Dorsolateral prefrontal cortex (tissue), 120 donors: ENCODE measurements at regions of chr1 and their contacts with region 1.

Region 1: GRCh38 chr1:231200388-231201031 is 38.7 kb downstream of the TRIM67 start:
- DNase-seq: no peak
- H3K4me3 ChIP-seq: no peak overlapping the region
- H3K27ac ChIP-seq: no peak overlapping the region
- H3K27me3 ChIP-seq: no peaks in the 10 kb centered on the region
- CTCF ChIP-seq: no peak

Region 2: DNA sequence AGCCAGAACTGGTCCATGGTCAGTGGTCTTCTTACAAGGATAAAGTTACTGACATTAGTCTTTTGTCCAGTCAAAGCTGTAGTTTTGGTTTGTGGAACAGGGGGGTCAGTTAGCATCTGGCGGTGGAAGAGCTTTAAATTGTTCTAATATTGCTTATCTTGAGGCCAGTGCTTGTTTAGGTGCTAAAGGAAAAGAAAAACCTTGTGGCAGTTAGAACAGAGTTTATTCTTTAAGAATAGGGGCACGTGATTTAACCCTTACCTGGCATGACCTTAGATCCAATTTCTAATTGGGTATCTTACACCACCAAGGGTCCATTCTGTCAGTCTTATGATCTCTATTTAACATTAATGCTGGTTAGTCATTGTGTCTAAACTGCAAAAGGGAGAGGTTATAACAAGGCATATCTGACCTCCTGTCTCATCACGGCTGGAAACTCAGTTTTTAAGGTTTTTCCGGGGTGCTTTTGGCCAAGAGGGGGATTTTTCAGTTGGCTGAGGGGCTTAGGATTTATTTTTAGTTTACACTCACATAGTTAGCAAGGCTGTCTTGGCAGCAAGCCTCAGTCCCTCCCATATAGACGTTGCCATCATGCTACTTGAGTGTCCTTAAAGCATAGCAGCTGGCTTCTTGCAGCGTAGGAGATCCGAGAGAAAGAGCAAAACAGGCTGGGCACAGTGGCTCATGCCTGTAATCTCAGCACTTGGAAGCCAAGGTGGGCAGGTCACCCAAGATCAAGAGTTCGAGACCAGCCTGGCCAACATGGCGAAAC is 100.3 kb before region 1 on chr1:
- intact Hi-C with region 1: loop called in 1 of 2 experiments (anchors 5 kb)
- DNase-seq: no peak
- H3K4me3 ChIP-seq: no peak overlapping the region
- H3K27ac ChIP-seq: no peak overlapping the region
- H3K27me3 ChIP-seq: peaks cover 0 to 4% (median 0%) of the 10 kb centered on the region in 45 donors
- CTCF ChIP-seq: no peak

Region 3: GRCh38 chr1:231272880-231273279 is 72.4 kb after region 1 on chr1:
- intact Hi-C with region 1: no loop called
- DNase-seq: no peak
- H3K4me3 ChIP-seq: no peak overlapping the region
- H3K27ac ChIP-seq: no peak overlapping the region
- H3K27me3 ChIP-seq: no peaks in the 10 kb centered on the region
- CTCF ChIP-seq: no peak

Region 4: DNA sequence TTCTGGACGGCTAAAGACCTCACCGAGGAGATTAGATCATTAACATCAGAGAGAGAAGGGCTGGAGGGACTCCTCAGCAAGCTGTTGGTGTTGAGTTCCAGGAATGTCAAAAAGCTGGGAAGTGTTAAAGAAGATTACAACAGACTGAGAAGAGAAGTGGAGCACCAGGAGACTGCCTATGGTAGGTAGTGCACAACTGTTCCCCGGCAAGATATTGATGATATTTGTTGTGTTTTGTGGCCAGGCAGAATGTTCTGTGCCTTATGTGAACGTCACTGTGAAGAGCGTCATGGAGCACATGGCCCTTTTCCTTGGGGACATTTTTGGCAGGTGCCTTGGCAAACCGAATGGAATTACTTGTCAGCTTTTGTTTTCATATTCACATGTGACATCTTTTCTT is 617.8 kb after region 1 on chr1:
- intact Hi-C with region 1: no loop called
- DNase-seq: no peak
- H3K4me3 ChIP-seq: no peak overlapping the region
- H3K27ac ChIP-seq: peak overlapping the region in 9 of 59 donors; percentile 4 to 74 (median 39)
- H3K27me3 ChIP-seq: no peaks in the 10 kb centered on the region
- CTCF ChIP-seq: no peak

Region 5: GRCh38 chr1:232528472-232529089 is 1328.1 kb after region 1 on chr1:
- intact Hi-C with region 1: no loop called
- DNase-seq: no peak
- H3K4me3 ChIP-seq: no peak overlapping the region
- H3K27ac ChIP-seq: peak overlapping the region in 15 of 59 donors; percentile 3 to 48 (median 12)
- H3K27me3 ChIP-seq: no peaks in the 10 kb centered on the region
- CTCF ChIP-seq: no peak